Panc1 (cell line): ENCODE measurements at regions of chr12 and their contacts with region 1.

Region 1: GRCh38 chr12:123983822-123984485 is 10.9 kb downstream of the ZNF664 start:
- DNase-seq: no peak
- ATAC-seq: peak; percentile 96
- H3K4me3 ChIP-seq: no peak overlapping the region
- H3K27ac ChIP-seq: no peak overlapping the region
- H3K4me1 ChIP-seq: no peaks in the 10 kb centered on the region
- H3K27me3 ChIP-seq: no peaks in the 10 kb centered on the region
- CTCF ChIP-seq: peak; percentile 84

Region 2: GRCh38 chr12:123905319-123905925 is 78.5 kb before region 1 on chr12:
- CTCF ChIA-PET with region 1: no interaction called
- POLR2A ChIA-PET with region 1: no interaction called
- in situ Hi-C with region 1: no loop called
- intact Hi-C with region 1: loop called (anchors 5 kb)
- DNase-seq: peak; percentile 50
- ATAC-seq: no peak
- H3K4me3 ChIP-seq: no peak overlapping the region
- H3K27ac ChIP-seq: no peak overlapping the region
- H3K4me1 ChIP-seq: no peaks in the 10 kb centered on the region
- H3K27me3 ChIP-seq: no peaks in the 10 kb centered on the region
- CTCF ChIP-seq: peak; percentile 88

Region 3: DNA sequence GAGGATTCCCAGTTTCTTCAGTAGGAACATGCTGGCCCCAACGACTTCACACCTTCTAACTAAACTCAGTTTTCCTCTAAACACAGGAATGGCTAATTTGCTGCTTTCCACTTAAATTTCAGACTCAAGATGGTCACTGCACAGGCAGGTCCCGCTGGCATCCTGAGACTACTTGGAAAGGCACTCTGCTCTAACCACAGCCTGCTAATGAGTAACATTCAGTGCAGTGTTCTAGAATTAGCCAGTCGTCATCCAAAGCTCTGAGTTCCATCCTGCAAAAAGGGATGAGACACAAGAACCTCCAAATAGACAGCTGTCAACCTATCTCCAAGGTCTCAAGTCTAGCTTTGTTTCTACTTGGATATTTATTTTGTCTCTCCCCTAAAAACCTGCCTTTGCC is 17.4 kb before region 1 on chr12:
- CTCF ChIA-PET with region 1: no interaction called
- POLR2A ChIA-PET with region 1: no interaction called
- in situ Hi-C with region 1: no loop called
- intact Hi-C with region 1: no loop called
- DNase-seq: no peak
- ATAC-seq: no peak
- H3K4me3 ChIP-seq: no peak overlapping the region
- H3K27ac ChIP-seq: no peak overlapping the region
- H3K4me1 ChIP-seq: peaks cover 3% of the 10 kb centered on the region; the same call in 1 of the 2 replicates
- H3K27me3 ChIP-seq: no peaks in the 10 kb centered on the region
- CTCF ChIP-seq: no peak